CD4-positive, alpha-beta memory T cell (primary cell): ENCODE measurements at regions of chr12 and their contacts with region 1.

Region 1: DNA sequence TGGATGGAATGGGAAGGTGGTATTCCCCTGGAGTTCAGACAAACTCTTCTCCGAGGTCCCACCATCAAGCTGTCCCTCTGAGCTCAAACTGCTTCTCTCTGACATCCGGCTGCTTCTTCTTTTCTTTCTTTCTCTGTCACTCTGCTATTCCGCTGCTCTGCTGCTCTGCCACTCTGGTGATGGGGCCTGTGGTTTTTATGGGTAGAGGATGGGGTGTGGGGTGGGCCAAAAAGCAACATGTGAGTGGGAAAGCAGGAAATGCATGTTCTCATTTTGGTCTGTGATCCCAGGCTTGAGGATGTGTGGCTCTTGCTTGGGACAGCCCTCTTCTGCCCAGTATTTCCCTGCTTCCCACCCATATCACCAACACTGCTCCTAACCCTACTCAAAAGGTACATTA is 30.6 kb downstream of the CLECL1 start:
- DNase-seq: peak; percentile 54 to 74 (median 66)
- H3K4me3 ChIP-seq: peak overlapping the region; percentile 4 to 12
- H3K4me3 Mint-ChIP-seq: peak overlapping the region; percentile 35 to 81 (median 75)
- H3K27ac ChIP-seq: peak overlapping the region; percentile 58
- H3K27ac Mint-ChIP-seq: peak overlapping the region; percentile 85 to 97 (median 93)
- H3K4me1 ChIP-seq: peaks cover 77% of the 10 kb centered on the region
- H3K4me1 Mint-ChIP-seq: peaks cover 67 to 84% (median 73%) of the 10 kb centered on the region in 4 donors
- H3K27me3 ChIP-seq: no peaks in the 10 kb centered on the region
- H3K27me3 Mint-ChIP-seq: no peaks in the 10 kb centered on the region

Region 2: GRCh38 chr12:9662500-9662899 is 39.8 kb before region 1 on chr12:
- CTCF ChIA-PET with region 1: no interaction called
- POLR2A ChIA-PET with region 1: interaction called, 69 read pairs
- intact Hi-C with region 1: no loop called
- DNase-seq: no peak
- H3K4me3 ChIP-seq: no peak overlapping the region
- H3K4me3 Mint-ChIP-seq: peak overlapping the region in 7 of 8 donors; percentile 37 to 72 (median 54)
- H3K27ac ChIP-seq: peak overlapping the region; percentile 41
- H3K27ac Mint-ChIP-seq: peak overlapping the region; percentile 68 to 94 (median 85)
- H3K4me1 ChIP-seq: peaks cover 91% of the 10 kb centered on the region
- H3K4me1 Mint-ChIP-seq: peaks cover 65 to 84% (median 76%) of the 10 kb centered on the region in 4 donors
- H3K27me3 ChIP-seq: no peaks in the 10 kb centered on the region
- H3K27me3 Mint-ChIP-seq: no peaks in the 10 kb centered on the region

Region 3: GRCh38 chr12:9687228-9687627 is 15.0 kb before region 1 on chr12:
- CTCF ChIA-PET with region 1: interaction called, 32 read pairs
- POLR2A ChIA-PET with region 1: interaction called, 182 read pairs
- intact Hi-C with region 1: loop called (anchors 1 kb)
- DNase-seq: peak in 1 of 5 donors; percentile 50
- H3K4me3 ChIP-seq: no peak overlapping the region
- H3K4me3 Mint-ChIP-seq: peak overlapping the region in 5 of 8 donors; percentile 10 to 54 (median 44)
- H3K27ac ChIP-seq: no peak overlapping the region
- H3K27ac Mint-ChIP-seq: peak overlapping the region in 6 of 7 donors; percentile 29 to 83 (median 64)
- H3K4me1 ChIP-seq: peaks cover 73% of the 10 kb centered on the region
- H3K4me1 Mint-ChIP-seq: peaks cover 45 to 72% (median 65%) of the 10 kb centered on the region in 4 donors
- H3K27me3 ChIP-seq: no peaks in the 10 kb centered on the region
- H3K27me3 Mint-ChIP-seq: no peaks in the 10 kb centered on the region